Dendritic cell treated with granulocyte-macrophage colony-stimulating factor and Interleukin-4, amounts not matched to agents 40 ng/mL and 50 ng/mL, for 4 days (primary cell): ENCODE measurements at regions of chr1 and their contacts with region 1.

Region 1: GRCh38 chr1:113871597-113872113 is at the start of gene PTPN22:
- H3K4me3 Mint-ChIP-seq: no peak within 1 kb of the TSS
- H3K27ac Mint-ChIP-seq: peak within 1 kb of the TSS; percentile 79
- H3K4me1 Mint-ChIP-seq: peaks cover 47% of the 10 kb centered on the region
- H3K27me3 Mint-ChIP-seq: no peaks in the 10 kb centered on the region

Region 2: DNA sequence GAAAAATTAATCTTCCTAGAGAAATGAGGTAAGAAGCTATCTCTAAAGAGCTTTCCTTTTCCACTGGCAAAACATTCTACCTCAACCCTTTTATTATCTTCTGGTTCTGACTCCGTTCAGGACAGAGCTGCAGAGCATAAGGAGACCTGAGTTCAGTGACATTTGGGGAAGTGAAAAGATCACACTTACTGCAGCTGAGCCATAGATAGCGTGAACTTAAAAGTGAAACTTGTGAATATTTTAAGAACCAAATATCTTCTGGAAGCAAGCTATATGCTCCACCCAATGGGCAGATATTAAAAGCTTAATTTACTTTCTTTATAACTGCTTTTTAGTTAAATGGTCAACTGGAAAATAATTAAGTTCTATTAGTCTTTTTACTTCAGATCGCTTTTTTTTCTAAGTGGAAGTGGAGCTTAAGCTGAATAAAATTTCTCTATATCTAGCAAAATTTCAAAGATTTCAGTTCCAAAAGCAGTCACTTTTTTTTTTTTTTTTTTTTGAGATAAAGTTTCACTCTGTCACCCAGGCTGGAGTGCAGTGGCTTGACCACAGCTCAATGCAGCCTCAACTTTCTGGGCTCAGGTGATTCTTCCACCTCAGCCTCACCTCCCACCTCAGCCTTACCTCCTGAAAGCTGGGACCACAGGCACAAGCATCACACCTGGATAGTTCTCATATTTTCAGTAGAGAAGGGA is 12.0 kb before region 1 on chr1:
- intact Hi-C with region 1: loop called (anchors 1 kb)
- H3K4me3 Mint-ChIP-seq: peak overlapping the region; percentile 44
- H3K27ac Mint-ChIP-seq: peak overlapping the region; percentile 69
- H3K4me1 Mint-ChIP-seq: peaks cover 65% of the 10 kb centered on the region
- H3K27me3 Mint-ChIP-seq: no peaks in the 10 kb centered on the region